Activated CD4-positive, alpha-beta memory T cell treated with anti-CD3 and anti-CD28 coated beads, Interleukin-2, amount 10 ng/mL, durations not matched to agents 7 days and 5 days (primary cell): ENCODE measurements at regions of chrX and their contacts with region 1.

Region 1: GRCh38 chrX:12946838-12947544 is 27.9 kb upstream of the TMSB4X start:
- DNase-seq: peak; percentile 78
- H3K4me3 Mint-ChIP-seq: peak overlapping the region; percentile 45
- H3K27ac Mint-ChIP-seq: peak overlapping the region; percentile 85
- H3K4me1 Mint-ChIP-seq: peaks cover 57% of the 10 kb centered on the region
- H3K27me3 Mint-ChIP-seq: no peaks in the 10 kb centered on the region

Region 2: GRCh38 chrX:12685541-12685940 is 261.4 kb before region 1 on chrX:
- CTCF ChIA-PET with region 1: no interaction called
- POLR2A ChIA-PET with region 1: no interaction called
- DNase-seq: no peak
- H3K4me3 Mint-ChIP-seq: no peak overlapping the region
- H3K27ac Mint-ChIP-seq: no peak overlapping the region
- H3K4me1 Mint-ChIP-seq: no peaks in the 10 kb centered on the region
- H3K27me3 Mint-ChIP-seq: peaks cover 9% of the 10 kb centered on the region

Region 3: DNA sequence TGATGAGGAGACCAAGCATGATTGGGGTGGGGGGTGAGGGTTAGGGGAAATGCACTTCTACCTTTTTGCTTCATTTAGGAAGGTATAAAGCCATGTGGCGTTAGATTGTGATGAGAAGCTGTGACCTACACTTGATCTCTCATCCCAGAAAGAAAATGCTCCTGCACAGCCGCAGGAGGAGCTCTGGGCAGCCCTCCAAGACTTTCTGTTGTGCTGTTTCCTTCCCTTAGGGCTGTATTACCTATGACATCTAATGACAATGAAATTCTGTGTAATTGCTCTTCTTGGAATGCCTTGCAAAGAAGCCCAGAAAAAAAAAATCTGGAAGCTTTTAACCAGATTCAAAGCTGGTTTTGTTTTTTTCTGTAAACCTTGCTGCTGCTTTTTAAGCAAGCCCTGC is 142.3 kb before region 1 on chrX:
- CTCF ChIA-PET with region 1: no interaction called
- POLR2A ChIA-PET with region 1: no interaction called
- DNase-seq: no peak
- H3K4me3 Mint-ChIP-seq: no peak overlapping the region
- H3K27ac Mint-ChIP-seq: no peak overlapping the region
- H3K4me1 Mint-ChIP-seq: peaks cover 11% of the 10 kb centered on the region
- H3K27me3 Mint-ChIP-seq: no peaks in the 10 kb centered on the region

Region 4: DNA sequence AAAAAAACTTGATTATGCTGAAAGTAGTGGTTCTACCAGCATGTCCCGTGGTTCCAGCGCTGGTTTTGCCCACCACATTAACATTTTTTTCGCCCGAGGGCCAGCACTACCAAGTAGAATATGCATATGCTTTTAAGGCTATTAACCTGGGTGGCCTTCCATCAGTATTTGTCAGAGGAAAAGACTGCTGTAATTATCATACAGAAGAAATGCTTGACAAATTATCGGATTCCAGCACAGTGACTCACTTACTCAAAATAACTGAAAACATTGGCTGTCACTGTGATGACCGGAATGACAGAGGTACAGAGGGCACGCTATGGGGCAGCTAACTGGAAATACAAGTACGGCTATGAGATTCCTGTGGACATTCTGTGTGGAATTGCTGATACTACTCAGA is 121.2 kb before region 1 on chrX:
- CTCF ChIA-PET with region 1: no interaction called
- POLR2A ChIA-PET with region 1: no interaction called
- DNase-seq: no peak
- H3K4me3 Mint-ChIP-seq: no peak overlapping the region
- H3K27ac Mint-ChIP-seq: no peak overlapping the region
- H3K4me1 Mint-ChIP-seq: no peaks in the 10 kb centered on the region
- H3K27me3 Mint-ChIP-seq: peaks cover 6% of the 10 kb centered on the region

Region 5: DNA sequence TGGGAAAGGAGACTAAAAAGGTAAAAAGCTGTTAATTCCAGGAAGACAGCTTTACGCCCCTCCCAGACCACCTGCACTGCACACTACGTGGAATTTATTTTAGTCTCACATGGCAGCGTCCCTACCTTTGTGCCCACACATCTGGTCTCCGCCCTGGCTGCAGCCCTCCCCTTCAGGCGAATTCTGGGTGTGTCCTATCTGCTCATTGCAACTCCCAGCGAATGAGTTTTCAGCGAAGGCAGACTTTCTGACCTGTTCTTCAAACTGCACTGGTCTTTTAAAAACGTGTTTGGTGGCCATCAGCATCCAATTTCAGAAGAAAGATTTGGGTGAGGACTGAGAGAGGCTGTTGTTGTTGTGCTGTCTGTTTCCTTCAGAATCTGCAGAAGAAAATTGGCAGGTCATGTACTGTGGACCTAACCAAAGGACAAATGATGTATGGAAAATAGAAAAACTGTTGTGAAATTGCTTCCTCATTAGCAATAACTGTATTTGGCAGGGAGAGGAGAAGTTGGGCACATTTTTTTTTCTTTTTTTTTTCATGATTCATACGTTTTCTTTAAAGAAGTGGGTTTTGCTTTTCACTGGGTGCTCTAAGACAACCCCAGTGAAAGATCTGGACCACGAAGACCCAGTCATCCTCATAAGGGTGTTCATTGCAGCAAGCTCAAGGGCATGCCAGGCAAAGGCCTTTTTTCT is 36.4 kb before region 1 on chrX:
- CTCF ChIA-PET with region 1: no interaction called
- POLR2A ChIA-PET with region 1: no interaction called
- DNase-seq: no peak
- H3K4me3 Mint-ChIP-seq: no peak overlapping the region
- H3K27ac Mint-ChIP-seq: no peak overlapping the region
- H3K4me1 Mint-ChIP-seq: no peaks in the 10 kb centered on the region
- H3K27me3 Mint-ChIP-seq: peaks cover 2% of the 10 kb centered on the region

Region 6: GRCh38 chrX:12967711-12968465 is 20.9 kb after region 1 on chrX:
- CTCF ChIA-PET with region 1: interaction called, 50 read pairs
- POLR2A ChIA-PET with region 1: interaction called, 1,343 read pairs
- DNase-seq: peak; percentile 48
- H3K4me3 Mint-ChIP-seq: peak overlapping the region; percentile 63
- H3K27ac Mint-ChIP-seq: peak overlapping the region; percentile 94
- H3K4me1 Mint-ChIP-seq: peaks cover 55% of the 10 kb centered on the region
- H3K27me3 Mint-ChIP-seq: no peaks in the 10 kb centered on the region

Region 7: GRCh38 chrX:13051529-13052172 is 104.7 kb after region 1 on chrX:
- CTCF ChIA-PET with region 1: interaction called, 5 read pairs
- POLR2A ChIA-PET with region 1: interaction called, 10 read pairs
- DNase-seq: peak; percentile 20
- H3K4me3 Mint-ChIP-seq: no peak overlapping the region
- H3K27ac Mint-ChIP-seq: peak overlapping the region; percentile 92
- H3K4me1 Mint-ChIP-seq: peaks cover 65% of the 10 kb centered on the region
- H3K27me3 Mint-ChIP-seq: no peaks in the 10 kb centered on the region

Region 8: DNA sequence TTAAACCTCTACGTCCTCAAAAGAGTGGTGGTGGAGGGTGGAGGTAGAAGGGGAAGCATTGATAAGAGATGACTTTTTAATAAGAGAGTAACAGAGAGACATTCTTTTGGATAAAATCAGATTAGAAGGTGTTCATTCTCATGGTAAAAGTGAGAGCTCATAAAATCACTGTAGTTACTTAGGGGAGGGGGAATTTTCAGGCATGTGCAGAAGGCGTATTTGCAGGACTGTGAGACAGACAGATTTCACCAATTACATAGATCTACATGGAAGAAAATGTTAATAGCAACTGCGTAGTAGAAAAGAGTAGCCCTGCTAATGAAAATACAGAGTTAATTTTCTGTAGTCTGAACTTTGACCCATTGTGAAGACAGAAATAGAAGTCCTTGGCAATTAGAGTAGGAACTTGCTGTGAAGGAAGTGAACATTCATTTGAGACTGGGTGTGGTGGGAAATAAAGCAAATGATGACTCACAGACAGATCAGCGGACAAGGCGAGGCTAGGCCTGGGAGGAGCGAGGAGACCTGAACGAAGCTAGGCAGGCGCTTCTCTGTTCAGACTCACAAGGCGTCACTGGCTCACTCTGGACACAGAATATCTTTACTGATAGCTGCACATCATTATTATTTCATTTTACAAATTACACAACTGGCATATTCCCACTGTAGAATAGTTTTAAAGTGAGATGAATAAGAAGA is 154.6 kb after region 1 on chrX:
- CTCF ChIA-PET with region 1: interaction called, 273 read pairs
- POLR2A ChIA-PET with region 1: no interaction called
- DNase-seq: peak; percentile 66
- H3K4me3 Mint-ChIP-seq: no peak overlapping the region
- H3K27ac Mint-ChIP-seq: peak overlapping the region; percentile 76
- H3K4me1 Mint-ChIP-seq: peaks cover 62% of the 10 kb centered on the region
- H3K27me3 Mint-ChIP-seq: no peaks in the 10 kb centered on the region

Region 9: DNA sequence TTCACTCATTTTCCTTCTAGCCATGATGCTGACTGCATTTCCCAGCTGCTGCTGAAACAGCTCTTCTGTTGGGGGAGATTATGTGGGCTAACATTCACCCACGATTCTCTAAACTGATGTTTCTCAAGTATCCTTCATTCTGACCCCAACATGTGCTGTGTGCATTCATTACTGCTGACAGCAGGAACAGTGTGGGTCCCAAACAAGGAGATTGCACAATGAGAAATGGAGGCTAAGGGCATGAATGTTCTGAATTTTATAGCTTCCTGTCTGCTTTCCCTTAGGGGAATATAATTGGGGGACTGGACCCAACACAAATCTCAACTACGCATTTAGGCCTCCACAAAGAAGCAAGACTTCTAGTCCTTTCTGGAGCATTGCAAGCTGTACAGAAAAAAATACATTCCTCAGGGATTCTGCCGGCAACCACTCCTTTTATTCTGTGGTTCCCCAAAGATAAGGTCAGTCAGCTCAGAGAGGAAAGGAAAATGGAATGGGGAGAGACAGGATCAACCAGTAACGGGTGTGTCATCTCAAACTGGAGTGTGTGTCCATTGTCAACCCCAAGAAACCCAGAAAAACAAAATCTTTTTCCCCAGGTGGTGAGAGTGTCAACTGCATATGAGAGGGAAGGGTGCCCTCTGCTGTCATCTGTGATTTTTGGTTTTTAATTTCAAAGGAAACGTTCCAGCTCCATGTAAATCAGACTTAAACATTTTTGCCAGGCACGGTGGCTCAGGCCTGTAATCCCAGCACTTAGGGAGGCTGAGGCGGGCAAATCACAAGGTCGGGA is 540.9 kb after region 1 on chrX:
- CTCF ChIA-PET with region 1: interaction called, 49 read pairs
- POLR2A ChIA-PET with region 1: interaction called, 12 read pairs
- DNase-seq: peak; percentile 38
- H3K4me3 Mint-ChIP-seq: no peak overlapping the region
- H3K27ac Mint-ChIP-seq: peak overlapping the region; percentile 29
- H3K4me1 Mint-ChIP-seq: peaks cover 18% of the 10 kb centered on the region
- H3K27me3 Mint-ChIP-seq: no peaks in the 10 kb centered on the region